ENCODE measurements at regions of chr1 and their contacts with region 1.

Region 1: DNA sequence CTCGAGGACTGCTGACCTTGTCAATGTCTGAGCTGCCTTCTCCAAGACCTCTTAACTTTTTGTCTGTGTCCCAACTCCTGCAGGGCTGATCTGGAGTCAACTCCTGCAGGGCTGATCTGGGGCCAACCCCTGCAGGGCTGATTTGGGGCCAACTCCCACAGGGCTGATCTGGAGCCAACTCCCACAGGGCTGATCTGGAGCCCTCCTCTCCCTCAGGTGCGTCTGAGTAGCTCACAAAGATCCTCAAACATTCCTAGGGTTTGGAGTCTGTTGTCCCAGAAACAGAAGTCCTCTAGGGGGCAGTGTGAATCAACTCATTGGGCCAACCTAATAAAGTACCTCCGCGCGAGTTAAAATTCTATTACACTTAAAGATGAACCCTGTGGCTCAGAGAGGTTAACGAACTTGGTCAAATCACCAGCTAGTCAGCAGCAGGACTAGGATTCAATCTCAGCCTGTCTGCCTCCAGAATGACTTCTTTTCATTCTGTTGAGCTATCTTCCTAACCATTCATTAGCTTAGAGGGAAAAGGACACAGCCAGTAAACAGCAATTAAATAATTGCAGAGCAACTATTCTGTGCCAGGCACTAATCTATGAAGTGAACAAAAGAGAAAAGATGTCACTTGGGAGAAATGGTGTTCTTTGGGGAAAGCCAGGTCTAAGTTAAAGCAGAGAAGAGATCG is 17.2 kb upstream of the RLF start:
- DNase-seq: peak; percentile 88
- H3K4me3 Mint-ChIP-seq: no peak overlapping the region
- H3K27ac Mint-ChIP-seq: no peak overlapping the region
- H3K4me1 Mint-ChIP-seq: peaks cover 19% of the 10 kb centered on the region
- H3K27me3 Mint-ChIP-seq: peaks cover 54% of the 10 kb centered on the region

Region 2: DNA sequence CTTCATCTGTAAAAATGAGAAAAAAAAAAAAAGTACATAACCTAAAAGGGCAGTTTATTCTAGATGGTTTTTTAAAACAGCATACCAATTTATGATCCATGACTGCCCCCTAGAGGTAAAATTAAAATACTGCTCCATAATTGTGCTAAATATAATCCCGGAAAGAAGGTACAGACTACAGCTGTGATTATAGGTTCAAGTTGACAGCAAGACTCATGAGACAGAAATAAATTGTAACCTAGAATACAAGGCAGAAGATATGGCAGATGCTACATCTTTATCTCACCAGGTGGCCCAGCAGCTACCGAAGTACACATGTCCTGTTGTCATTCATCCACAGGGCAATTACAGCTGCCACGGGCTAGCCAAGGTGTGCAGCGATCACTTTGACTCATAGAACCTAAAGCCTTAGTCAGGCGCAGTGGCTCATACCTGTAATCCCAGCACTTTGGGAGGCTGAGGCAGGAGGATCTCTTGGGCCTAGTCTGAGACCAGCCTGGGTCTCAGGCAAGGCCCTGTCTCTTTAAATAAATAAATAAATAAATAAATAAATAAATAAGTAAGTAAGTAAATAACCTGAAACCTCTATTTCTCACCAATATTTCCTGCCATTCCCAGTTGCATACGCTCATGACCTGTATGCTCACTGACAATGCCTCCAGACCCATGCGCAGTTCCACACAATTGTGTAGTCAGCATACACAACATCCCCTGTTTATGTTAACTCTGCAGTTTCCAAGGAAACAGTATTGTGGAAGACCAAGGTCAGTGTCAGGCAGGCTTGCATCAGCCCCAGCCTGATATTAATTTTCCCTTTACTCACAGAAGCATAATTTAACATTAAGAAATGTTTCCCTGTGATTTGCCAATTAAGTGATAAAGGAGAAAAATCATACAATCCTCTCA is 423.7 kb before region 1 on chr1:
- intact Hi-C with region 1: no loop called
- DNase-seq: peak; percentile 70
- H3K4me3 Mint-ChIP-seq: no peak overlapping the region
- H3K27ac Mint-ChIP-seq: no peak overlapping the region
- H3K4me1 Mint-ChIP-seq: no peaks in the 10 kb centered on the region
- H3K27me3 Mint-ChIP-seq: peaks cover 54% of the 10 kb centered on the region

Region 3: DNA sequence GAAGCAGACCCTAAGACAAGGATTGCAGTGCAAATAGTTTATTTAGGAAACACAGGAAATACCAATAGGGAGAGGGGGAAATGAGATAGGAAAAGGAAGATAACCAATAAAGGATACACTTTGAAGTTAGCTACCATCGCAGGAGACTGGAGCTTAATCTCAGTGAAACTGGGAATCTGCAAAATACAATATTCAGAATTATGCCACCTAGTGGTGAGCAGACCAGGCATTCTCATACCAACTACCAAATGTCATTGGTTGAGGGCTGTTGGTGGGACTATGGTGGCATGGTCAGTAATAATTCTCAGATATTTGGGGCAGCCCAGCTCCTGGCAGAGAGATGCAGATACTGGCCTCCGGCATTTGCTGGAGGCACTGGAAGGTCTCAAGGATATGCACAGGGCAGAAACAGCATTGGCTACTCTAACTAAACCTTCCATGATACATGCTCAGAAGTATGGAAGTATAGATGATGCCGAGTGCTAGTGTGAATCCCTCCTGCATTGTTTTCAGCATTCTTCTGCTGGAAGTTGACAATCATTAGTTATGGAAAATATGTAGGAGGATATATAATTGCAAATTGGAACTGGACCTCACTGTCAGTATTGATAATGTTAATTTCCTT is 294.5 kb after region 1 on chr1:
- intact Hi-C with region 1: loop called (anchors 1 kb)
- DNase-seq: peak; percentile 66
- H3K4me3 Mint-ChIP-seq: no peak overlapping the region
- H3K27ac Mint-ChIP-seq: no peak overlapping the region
- H3K4me1 Mint-ChIP-seq: peaks cover 2% of the 10 kb centered on the region
- H3K27me3 Mint-ChIP-seq: no peaks in the 10 kb centered on the region